ENCODE measurements at regions of chr13 and their contacts with region 1.

Region 1: GRCh38 chr13:109145631-109146030 is 516.2 kb downstream of the MYO16 start:
- DNase-seq: peak; percentile 72
- H3K4me3 Mint-ChIP-seq: no peak overlapping the region
- H3K27ac Mint-ChIP-seq: no peak overlapping the region
- H3K4me1 Mint-ChIP-seq: peaks cover 30% of the 10 kb centered on the region
- H3K27me3 Mint-ChIP-seq: no peaks in the 10 kb centered on the region
- CTCF ChIP-seq: peak; percentile 76

Region 2: DNA sequence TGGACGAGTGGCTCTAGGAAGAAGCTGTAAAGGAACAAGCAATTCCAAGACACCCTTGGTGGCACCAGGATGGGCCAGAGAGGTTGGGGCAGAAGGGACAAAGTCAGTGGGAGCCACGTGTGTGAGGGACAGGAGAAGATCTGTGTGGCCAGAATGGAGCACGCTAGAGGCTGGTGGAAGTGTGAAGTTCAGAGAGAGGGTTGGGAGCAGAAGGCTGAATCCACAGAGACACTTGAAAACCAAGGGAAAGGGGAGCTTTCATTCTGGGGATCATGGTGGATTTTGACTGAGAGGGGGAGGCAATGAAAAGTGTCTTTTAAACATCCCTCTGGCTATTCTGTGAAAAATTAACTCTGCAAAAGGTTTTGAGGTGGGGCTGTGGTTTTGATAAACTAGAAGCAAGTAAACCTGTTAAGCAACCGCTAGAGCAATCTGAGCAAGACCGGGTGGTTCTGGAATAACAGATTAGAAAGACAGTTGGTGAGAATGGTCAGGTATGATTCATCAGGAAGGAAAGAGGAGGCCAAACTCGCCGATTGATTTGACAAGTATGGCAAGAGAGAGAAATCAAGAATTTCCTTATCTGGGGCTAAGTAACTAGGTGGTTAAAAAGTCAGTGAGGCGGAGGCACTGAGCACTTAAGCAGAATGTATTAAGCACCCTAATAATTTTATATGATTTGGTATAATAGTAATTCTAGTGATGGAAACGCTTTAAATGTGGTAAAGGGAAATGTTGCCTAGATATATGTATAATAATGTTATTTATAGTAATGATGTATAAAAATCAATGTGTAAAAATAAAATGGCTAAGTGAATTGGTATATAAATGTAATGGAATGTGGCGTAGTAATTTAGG is 376.2 kb before region 1 on chr13:
- CTCF ChIA-PET with region 1: no interaction called
- POLR2A ChIA-PET with region 1: no interaction called
- intact Hi-C with region 1: no loop called
- DNase-seq: peak; percentile 33
- H3K4me3 Mint-ChIP-seq: no peak overlapping the region
- H3K27ac Mint-ChIP-seq: no peak overlapping the region
- H3K4me1 Mint-ChIP-seq: peaks cover 9% of the 10 kb centered on the region
- H3K27me3 Mint-ChIP-seq: peaks cover 96% of the 10 kb centered on the region
- CTCF ChIP-seq: no peak

Region 3: GRCh38 chr13:109156181-109156935 is 10.7 kb after region 1 on chr13:
- CTCF ChIA-PET with region 1: interaction called, 7 read pairs
- POLR2A ChIA-PET with region 1: interaction called, 35 read pairs
- intact Hi-C with region 1: no loop called
- DNase-seq: peak; percentile 82
- H3K4me3 Mint-ChIP-seq: peak overlapping the region; percentile 64
- H3K27ac Mint-ChIP-seq: peak overlapping the region; percentile 95
- H3K4me1 Mint-ChIP-seq: peaks cover 61% of the 10 kb centered on the region
- H3K27me3 Mint-ChIP-seq: no peaks in the 10 kb centered on the region
- CTCF ChIP-seq: no peak

Region 4: DNA sequence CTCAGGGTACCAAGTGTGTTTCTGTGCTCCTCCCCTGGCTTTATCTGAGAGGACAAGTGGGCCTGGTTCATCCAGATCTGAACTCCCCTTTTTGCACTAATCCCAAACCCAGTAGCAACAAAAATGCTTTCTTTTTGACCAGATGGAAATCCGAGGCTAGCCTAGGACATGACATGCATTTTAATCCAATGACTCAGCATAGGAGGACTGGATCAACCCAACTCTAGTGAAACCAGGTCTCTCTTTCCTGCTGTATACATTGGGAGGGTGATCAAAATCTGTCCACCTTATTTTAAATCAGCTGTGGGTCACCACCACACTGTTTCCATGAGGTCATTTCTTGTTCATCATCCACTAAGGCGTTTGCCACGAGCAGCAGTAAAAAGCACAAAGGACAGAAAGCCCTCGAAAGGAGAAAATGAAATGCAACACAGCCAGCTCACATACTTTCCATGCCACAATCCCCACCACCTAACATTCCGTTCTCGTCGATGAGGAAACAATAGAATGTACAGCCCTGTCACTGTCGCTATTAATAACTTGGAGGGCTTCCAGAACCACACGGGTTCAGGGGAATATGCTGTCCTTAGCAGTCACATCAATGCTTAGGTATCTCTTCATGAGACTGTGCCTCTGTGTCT is 97.8 kb after region 1 on chr13:
- CTCF ChIA-PET with region 1: interaction called, 3 read pairs
- POLR2A ChIA-PET with region 1: interaction called, 12 read pairs
- intact Hi-C with region 1: loop called (anchors 1 kb)
- DNase-seq: peak; percentile 79
- H3K4me3 Mint-ChIP-seq: peak overlapping the region; percentile 67
- H3K27ac Mint-ChIP-seq: peak overlapping the region; percentile 89
- H3K4me1 Mint-ChIP-seq: peaks cover 34% of the 10 kb centered on the region
- H3K27me3 Mint-ChIP-seq: no peaks in the 10 kb centered on the region
- CTCF ChIP-seq: no peak

Region 5: GRCh38 chr13:109275852-109276251 is 130.2 kb after region 1 on chr13:
- CTCF ChIA-PET with region 1: interaction called, 4 read pairs
- POLR2A ChIA-PET with region 1: interaction called, 41 read pairs
- intact Hi-C with region 1: loop called (anchors 5 kb)
- DNase-seq: peak; percentile 41
- H3K4me3 Mint-ChIP-seq: no peak overlapping the region
- H3K27ac Mint-ChIP-seq: no peak overlapping the region
- H3K4me1 Mint-ChIP-seq: peaks cover 15% of the 10 kb centered on the region
- H3K27me3 Mint-ChIP-seq: no peaks in the 10 kb centered on the region
- CTCF ChIP-seq: no peak

Region 6: DNA sequence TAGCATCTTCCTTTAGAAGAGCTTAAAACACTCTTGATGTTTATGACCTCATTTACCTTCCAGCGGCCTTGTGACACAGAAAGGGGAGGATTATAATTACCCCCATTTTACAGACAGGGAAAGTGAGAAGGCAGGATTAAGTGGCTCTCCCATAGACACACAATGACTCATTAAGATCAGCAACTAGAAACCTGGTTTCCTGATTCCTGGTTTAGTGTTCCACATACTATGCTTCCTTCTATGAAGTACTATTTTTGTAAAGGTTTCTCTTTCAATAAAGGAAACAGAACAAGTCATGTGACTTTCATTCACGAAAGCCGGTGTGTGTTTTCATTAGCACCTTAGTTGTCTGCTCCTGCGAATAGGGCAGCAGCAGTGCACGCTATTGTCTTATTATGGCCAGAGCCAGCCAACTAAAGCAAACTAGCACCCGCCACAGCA is 632.5 kb after region 1 on chr13:
- CTCF ChIA-PET with region 1: interaction called, 30 read pairs
- POLR2A ChIA-PET with region 1: interaction called, 49 read pairs
- intact Hi-C with region 1: loop called (anchors 2 kb)
- DNase-seq: peak; percentile 81
- H3K4me3 Mint-ChIP-seq: peak overlapping the region; percentile 84
- H3K27ac Mint-ChIP-seq: peak overlapping the region; percentile 70
- H3K4me1 Mint-ChIP-seq: peaks cover 54% of the 10 kb centered on the region
- H3K27me3 Mint-ChIP-seq: no peaks in the 10 kb centered on the region
- CTCF ChIP-seq: no peak

Region 7: DNA sequence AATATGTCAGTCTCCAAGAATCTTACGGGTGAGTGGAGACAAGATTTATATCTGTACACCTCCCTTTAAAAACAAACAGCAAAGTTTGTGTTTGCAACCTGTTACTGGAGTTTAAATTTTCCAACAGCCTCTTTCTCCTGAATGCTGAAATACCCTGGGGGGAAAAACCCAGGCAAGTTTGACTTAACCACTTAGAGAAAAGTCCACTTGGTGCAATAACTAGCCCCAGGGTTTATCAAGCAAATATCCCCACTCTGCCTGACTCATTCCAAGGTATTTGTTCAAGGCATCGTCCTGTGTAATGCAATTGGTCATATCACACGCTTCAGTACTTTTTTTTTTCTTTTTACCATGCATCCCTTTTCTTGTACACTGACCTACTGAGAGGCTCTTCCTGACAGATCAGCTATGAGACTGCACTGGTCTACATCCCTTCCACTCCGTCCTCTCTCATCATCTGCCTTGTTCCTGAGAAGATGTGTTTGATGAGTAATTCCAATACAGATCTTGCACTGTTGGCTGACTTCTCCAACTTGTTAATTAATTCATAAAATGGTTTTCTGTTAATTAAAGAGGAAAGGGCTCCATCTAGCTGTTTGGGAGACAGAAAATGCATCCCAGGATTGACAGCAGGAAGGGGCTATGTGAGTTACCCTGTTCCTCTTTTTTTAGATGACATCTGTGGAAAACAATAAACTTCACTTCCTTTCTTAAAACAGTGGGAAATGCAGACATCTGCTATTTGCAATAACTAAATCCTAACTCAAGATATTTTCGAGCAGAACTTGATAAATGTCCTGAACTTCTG is 853.3 kb after region 1 on chr13:
- CTCF ChIA-PET with region 1: no interaction called
- POLR2A ChIA-PET with region 1: no interaction called
- intact Hi-C with region 1: loop called (anchors 1 kb)
- DNase-seq: peak; percentile 95
- H3K4me3 Mint-ChIP-seq: no peak overlapping the region
- H3K27ac Mint-ChIP-seq: peak overlapping the region; percentile 29
- H3K4me1 Mint-ChIP-seq: peaks cover 37% of the 10 kb centered on the region
- H3K27me3 Mint-ChIP-seq: no peaks in the 10 kb centered on the region
- CTCF ChIP-seq: peak; percentile 14

Measured in MCF 10A (cell line).